Tibial artery (tissue), 4 donors: ENCODE measurements at regions of chr7 and their contacts with region 1.

Region 1: DNA sequence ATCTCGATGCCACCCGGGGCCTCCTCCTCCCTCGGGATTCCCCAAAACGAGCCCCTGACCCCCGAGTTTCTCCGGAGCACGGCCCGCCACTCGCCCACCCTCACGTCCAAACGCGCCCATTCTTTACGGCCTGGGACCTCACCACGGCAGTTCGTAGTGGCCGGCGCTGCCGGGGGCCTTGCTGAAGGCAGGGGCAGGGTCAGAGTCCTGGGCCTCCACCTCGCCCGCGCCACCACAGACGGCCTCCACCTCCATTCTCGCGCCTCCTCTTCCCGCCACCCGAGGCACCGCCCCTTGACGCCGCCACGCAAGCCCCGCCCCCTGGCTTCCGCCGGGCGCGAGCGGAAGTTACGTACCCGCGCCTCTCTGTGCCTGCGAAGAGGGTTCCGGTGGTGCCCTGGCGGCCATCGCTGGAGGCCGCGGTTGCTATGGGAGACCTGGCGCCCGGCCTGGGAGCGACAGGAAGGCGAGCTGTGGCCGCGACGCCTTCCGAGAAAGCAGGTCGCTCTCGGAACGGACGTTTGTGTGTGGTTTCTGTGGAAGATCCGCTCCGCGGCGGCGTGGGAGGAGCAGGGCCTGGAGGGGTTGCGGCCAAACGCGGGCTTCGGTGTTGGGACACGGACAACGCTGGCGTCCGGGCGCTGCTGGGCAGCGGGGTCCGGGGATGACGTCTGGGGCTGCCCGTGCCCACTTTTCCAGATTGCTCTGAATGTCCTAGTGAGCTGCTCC is at the start of gene RFC2:
- DNase-seq: peak; percentile 95 to 98
- H3K4me3 ChIP-seq: peak within 1 kb of the TSS; percentile 64 to 67
- H3K27ac ChIP-seq: peak within 1 kb of the TSS; percentile 88
- H3K4me1 ChIP-seq: peaks cover 0 to 33% (median 30%) of the 10 kb centered on the region in 4 donors
- H3K27me3 ChIP-seq: no peaks in the 10 kb centered on the region
- CTCF ChIP-seq: peak; percentile 47 to 76

Region 2: GRCh38 chr7:74083117-74083876 is 171.0 kb before region 1 on chr7 and contains the start of gene LIMK1:
- intact Hi-C with region 1: loop called (anchors 10 kb)
- DNase-seq: peak; percentile 50 to 87
- H3K4me3 ChIP-seq: peak within 1 kb of the TSS; percentile 64 to 94
- H3K27ac ChIP-seq: peak within 1 kb of the TSS; percentile 68 to 70
- H3K4me1 ChIP-seq: peaks cover 0 to 31% (median 25%) of the 10 kb centered on the region in 4 donors
- H3K27me3 ChIP-seq: no peaks in the 10 kb centered on the region
- CTCF ChIP-seq: no peak

Region 3: DNA sequence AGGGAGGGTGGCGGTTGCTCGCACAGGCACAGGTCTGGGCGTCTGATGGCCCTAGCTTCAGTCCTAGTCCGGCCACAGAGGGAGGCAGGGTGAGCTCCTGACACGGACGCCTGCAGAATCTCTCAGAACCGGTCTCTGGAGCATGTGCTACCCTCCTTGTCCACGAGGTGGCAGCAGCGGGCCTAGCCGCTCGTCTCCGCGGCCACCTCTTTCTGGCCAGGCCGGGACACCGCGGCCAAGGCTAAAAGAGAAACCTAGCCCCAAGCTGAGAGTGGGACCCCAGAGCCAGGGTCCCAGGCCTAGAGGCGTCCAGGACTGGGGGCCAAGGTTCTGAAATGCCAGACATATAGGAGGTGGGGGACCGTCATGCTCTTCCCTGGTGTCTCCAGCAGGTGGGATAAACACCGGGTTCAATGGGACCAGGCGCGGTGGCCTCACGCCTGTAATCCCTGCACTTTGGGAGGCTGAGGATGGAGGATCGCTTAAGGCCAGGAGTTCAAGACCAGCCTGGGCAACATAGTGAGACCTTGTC is 47.6 kb before region 1 on chr7:
- intact Hi-C with region 1: no loop called
- DNase-seq: peak; percentile 83 to 91
- H3K4me3 ChIP-seq: peak overlapping the region; percentile 20 to 30
- H3K27ac ChIP-seq: no peak overlapping the region
- H3K4me1 ChIP-seq: peaks cover 0 to 23% (median 4%) of the 10 kb centered on the region in 4 donors
- H3K27me3 ChIP-seq: peaks cover 0 to 5% of the 10 kb centered on the region in 2 donors
- CTCF ChIP-seq: peak; percentile 95 to 98